Activated CD4-positive, alpha-beta T cell treated with anti-CD3 and anti-CD28 coated beads, Interleukin-2, amount 10 ng/mL, durations not matched to agents 24 days and 14 days (primary cell): ENCODE measurements at regions of chrX and their contacts with region 1.

Region 1: GRCh38 chrX:40097497-40098263 is at the start of gene BCOR:
- DNase-seq: peak; percentile 90
- H3K4me3 Mint-ChIP-seq: peak within 1 kb of the TSS; percentile 97
- H3K27ac Mint-ChIP-seq: peak within 1 kb of the TSS; percentile 92
- H3K4me1 Mint-ChIP-seq: peaks cover 25% of the 10 kb centered on the region
- H3K27me3 Mint-ChIP-seq: no peaks in the 10 kb centered on the region
- total RNA-seq, gene BCOR: 61.0 and 64.5 TPM in 2 replicates

Region 2: DNA sequence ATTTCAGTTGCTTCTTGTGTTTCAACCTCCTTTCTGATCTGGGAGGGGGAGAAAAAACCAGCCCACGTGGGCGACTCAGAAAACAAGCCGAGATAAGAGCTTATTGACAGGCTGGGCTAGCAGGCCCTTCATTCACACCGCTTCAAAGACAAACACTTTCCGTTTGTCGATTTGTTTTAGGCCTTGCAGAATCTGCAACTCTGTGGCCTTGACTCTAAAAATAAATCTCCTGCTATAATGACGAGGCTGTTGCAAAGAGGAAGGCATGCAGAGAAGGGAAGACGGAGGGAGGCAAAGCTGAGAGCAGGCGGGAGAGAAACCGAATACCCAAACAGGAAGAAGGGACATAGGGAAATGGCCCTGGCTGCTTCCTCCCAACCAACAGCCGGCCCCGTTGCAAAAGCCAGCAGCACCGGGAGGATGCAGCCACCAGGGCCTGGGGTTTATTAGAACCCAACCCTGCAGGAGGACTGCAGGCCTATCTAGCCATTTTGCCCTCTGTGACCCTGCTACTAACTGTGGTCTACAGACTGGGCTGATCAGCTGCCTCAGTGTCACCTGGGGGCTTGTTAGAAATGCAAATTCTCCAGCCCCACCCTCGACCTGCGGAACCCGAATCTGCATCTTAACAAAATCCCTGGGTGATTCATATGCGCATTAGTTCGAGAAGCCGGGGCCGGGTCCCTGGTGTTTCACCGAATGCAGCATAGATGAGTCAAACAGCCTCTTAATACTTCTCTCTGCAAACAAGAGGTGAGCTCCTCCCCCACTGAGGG is 325.4 kb before region 1 on chrX:
- intact Hi-C with region 1: loop called (anchors 5 kb)
- DNase-seq: peak; percentile 81
- H3K4me3 Mint-ChIP-seq: peak overlapping the region; percentile 82
- H3K27ac Mint-ChIP-seq: peak overlapping the region; percentile 99
- H3K4me1 Mint-ChIP-seq: peaks cover 37% of the 10 kb centered on the region
- H3K27me3 Mint-ChIP-seq: no peaks in the 10 kb centered on the region

Region 3: GRCh38 chrX:39874202-39874816 is 223.4 kb before region 1 on chrX:
- intact Hi-C with region 1: loop called (anchors 5 kb)
- DNase-seq: peak; percentile 87
- H3K4me3 Mint-ChIP-seq: peak overlapping the region; percentile 19
- H3K27ac Mint-ChIP-seq: peak overlapping the region; percentile 85
- H3K4me1 Mint-ChIP-seq: peaks cover 34% of the 10 kb centered on the region
- H3K27me3 Mint-ChIP-seq: peaks cover 3% of the 10 kb centered on the region

Region 4: GRCh38 chrX:39996536-39996935 is 101.1 kb before region 1 on chrX:
- intact Hi-C with region 1: no loop called
- DNase-seq: no peak
- H3K4me3 Mint-ChIP-seq: no peak overlapping the region
- H3K27ac Mint-ChIP-seq: no peak overlapping the region
- H3K4me1 Mint-ChIP-seq: peaks cover 5% of the 10 kb centered on the region
- H3K27me3 Mint-ChIP-seq: peaks cover 4% of the 10 kb centered on the region

Region 5: DNA sequence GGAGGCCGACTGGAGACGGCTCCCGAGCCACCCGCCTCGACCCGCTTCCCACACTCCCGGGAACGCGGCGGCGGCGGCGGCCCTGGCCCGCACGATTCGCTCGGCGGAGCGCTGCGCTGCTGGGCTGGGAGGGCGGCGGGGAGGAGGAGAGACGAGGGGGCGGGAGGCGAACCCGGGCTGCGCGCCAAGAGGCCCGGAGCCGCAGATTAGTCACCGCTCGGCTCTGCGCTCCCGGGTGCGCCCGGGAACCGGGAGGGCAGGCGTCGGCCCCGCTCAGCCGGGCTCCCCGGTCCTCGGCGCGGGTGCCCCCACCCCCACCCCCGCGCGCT is 11.2 kb after region 1 on chrX:
- intact Hi-C with region 1: loop called (anchors 1 kb)
- DNase-seq: peak; percentile 84
- H3K4me3 Mint-ChIP-seq: peak overlapping the region; percentile 61
- H3K27ac Mint-ChIP-seq: no peak overlapping the region
- H3K4me1 Mint-ChIP-seq: peaks cover 9% of the 10 kb centered on the region
- H3K27me3 Mint-ChIP-seq: peaks cover 4% of the 10 kb centered on the region

Region 6: DNA sequence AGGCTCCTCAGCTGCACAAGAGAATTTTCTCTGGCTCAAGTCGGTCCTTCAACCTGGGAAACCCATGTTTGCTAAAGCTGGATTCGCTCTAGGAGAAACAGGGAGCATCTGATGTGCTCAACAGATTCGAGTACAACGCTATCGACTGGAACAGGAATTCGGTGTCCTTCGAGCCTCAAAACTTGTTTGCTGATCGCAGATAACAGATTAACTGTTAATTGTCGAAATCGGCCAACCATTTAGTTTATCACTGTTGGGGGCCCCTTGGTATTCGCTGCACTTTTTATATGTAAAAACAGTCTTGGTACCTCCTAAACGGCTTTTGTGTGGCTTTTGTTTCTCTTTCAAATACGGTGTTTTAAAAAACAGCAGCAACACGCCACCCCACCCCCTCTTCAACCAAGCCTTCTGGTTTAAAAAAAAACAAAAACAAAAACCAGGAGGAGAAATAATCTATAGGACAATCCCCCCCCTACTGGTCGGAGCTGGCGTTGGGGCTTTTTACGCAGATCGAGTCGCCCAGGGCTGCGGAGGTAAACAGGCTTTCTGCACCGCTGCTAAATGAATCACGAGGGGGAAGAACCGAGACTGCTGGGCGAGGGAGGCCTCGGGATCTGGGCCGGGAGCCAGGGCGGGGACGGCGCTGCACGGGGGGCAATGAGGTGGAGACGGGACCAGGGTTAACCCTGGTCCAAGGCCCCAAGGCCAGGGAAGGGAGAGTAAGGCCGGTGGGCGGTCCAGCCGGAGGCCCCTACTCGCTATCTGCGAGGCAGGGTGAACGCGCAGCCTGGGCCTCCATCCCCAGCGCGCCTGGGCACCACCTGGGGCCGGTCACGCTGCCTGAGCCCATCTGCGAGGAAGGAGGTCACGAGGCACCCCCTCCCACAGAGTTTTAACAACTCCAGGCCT is 71.8 kb after region 1 on chrX:
- intact Hi-C with region 1: loop called (anchors 1 kb)
- DNase-seq: peak; percentile 93
- H3K4me3 Mint-ChIP-seq: peak overlapping the region; percentile 93
- H3K27ac Mint-ChIP-seq: peak overlapping the region; percentile 93
- H3K4me1 Mint-ChIP-seq: peaks cover 44% of the 10 kb centered on the region
- H3K27me3 Mint-ChIP-seq: peaks cover under 1% of the 10 kb centered on the region